ENCODE measurements at regions of chr10 and their contacts with region 1.

Region 1: GRCh38 chr10:11782793-11783557 is 40.2 kb upstream of the PROSER2 start:
- DNase-seq: peak; percentile 70
- H3K27ac ChIP-seq: peak overlapping the region; percentile 0; the same call in 1 of the 2 replicates
- CTCF ChIP-seq: peak; percentile 85

Region 2: DNA sequence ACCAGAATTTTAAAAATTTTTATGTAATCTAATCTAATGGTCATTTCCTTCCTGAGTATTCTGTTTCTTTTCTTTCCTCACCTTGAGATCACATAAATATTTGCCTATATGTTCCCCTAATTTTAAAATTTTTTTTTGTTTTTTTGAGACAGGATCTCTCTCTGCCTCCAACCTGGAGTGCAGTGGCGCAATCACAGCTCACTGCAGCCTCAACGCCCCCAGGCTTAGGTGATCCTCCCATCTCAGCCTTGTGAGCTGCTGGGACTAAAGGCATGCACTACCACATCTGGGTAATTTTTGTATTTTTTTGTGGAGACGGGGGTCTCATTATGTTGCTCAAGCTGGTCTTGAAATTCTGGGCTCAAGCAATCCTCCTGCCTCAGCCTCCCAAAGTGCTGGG is 36.1 kb after region 1 on chr10:
- CTCF ChIA-PET with region 1: interaction called, 11 read pairs
- POLR2A ChIA-PET with region 1: no interaction called
- DNase-seq: no peak
- H3K27ac ChIP-seq: no peak overlapping the region
- CTCF ChIP-seq: no peak

Region 3: GRCh38 chr10:11986593-11987216 is 203.7 kb after region 1 on chr10:
- CTCF ChIA-PET with region 1: interaction called, 16 read pairs
- POLR2A ChIA-PET with region 1: no interaction called
- DNase-seq: peak; percentile 84
- H3K27ac ChIP-seq: no peak overlapping the region
- CTCF ChIP-seq: peak; percentile 84

Measured in RWPE1 (cell line).